A549 (cell line): ENCODE measurements at regions of chr17 and their contacts with region 1.

Region 1: DNA sequence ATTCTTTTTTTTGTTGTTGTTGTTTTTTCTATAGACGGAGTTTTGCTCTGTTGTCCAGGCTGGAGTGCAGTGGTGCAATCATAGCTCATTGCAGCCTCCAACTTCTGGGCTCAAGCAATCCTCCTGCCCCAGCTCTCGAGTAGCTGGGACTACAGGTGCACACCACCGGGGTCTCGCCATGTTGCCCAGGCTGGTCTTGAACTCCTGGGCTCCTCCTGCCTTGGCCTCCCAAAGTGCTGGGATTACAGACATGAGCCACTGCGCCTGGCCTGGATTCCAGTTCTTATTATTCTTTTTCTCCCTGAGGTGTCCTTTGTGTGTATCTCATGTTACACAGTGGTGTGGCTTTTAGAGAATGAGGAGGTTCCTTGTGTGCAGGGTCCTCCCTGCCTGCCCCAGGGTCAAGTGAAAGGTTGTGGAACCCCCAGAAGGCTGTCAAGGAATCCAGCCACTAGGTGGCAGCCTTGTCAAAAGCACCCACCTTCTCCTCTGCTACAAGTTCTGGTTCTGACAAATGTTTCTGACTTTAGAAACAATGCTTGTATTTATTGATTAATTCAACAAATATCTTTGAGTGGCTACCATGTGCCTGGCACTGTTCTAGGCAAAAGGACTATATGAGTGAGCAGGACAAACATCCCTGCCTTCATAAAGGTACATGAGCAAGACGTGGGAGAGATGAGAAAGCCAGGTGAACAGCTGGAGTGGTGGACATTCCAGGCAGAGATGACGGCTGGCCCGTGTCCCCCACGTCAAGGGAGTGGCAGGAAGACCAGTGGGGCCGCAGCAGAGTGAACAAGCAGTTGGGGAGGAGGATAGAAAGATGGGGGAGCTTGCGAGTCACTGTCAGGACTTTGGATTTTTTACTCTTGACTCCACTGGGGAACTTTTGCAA is 112.4 kb downstream of the SPECC1 start:
- DNase-seq: peak; percentile 68 to 82
- ATAC-seq: peak; percentile 89 to 90
- H3K4me3 ChIP-seq: no peak overlapping the region
- H3K27ac ChIP-seq: peak overlapping the region; percentile 34 to 68; a peak in 3 of 6 replicates
- H3K4me1 ChIP-seq: peaks cover 10% of the 10 kb centered on the region
- CTCF ChIP-seq: peak; percentile 99
- EP300 ChIP-seq: no peak
- POLR2A ChIP-seq: no peak
- RAD21 ChIP-seq: peak; percentile 98 to 99

Region 2: DNA sequence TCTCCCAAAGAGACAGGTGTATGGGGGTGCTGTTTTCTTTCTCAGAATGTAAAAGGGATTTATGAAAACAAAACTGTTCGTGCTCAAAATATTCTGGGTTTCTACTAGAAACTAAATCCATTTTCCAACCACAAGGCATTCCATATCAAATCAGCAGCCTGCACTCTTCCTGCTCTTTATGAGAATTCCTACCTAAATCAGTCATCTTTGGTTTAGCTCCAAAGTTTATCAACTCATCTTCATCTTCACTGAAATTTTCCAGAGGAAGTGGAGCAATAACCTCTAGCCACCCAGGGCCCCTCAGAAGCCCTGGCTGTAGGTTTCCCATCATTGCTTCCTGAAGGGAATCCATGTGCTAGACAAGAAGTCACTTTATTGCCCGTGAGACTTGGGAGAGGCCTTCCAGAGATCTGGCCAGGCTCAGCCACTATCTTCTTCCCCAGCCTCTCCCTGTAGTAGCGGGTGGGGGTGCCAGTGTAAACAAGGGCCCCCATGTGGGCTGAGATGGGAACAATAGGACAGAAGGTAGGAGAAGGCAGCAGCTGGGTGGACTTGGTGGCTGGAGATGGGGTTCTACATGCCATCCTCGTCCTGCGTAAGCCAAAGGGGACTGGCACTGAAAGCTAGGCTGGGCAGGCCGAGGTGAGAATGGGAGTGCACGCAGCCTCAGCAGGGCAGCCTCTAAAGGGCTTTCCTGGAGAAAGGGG is 351.5 kb before region 1 on chr17:
- CTCF ChIA-PET with region 1: no interaction called
- POLR2A ChIA-PET with region 1: no interaction called
- DNase-seq: no peak
- ATAC-seq: no peak
- H3K4me3 ChIP-seq: no peak overlapping the region
- H3K27ac ChIP-seq: peak overlapping the region in 1 of 2 experiments; percentile 21; a peak in 1 of 6 replicates
- H3K4me1 ChIP-seq: peaks cover 5% of the 10 kb centered on the region; the same call in 2 of the 3 replicates
- CTCF ChIP-seq: no peak
- EP300 ChIP-seq: no peak
- POLR2A ChIP-seq: no peak
- RAD21 ChIP-seq: no peak

Region 3: GRCh38 chr17:19992803-19993713 is 128.5 kb before region 1 on chr17:
- CTCF ChIA-PET with region 1: interaction called, 111 read pairs
- POLR2A ChIA-PET with region 1: no interaction called
- DNase-seq: peak; percentile 77 to 94
- ATAC-seq: peak; percentile 98 to 100
- H3K4me3 ChIP-seq: peak overlapping the region; percentile 38
- H3K27ac ChIP-seq: peak overlapping the region; percentile 84
- H3K4me1 ChIP-seq: peaks cover 11% of the 10 kb centered on the region
- CTCF ChIP-seq: peak; percentile 97
- EP300 ChIP-seq: no peak
- POLR2A ChIP-seq: no peak
- RAD21 ChIP-seq: peak; percentile 98

Region 4: DNA sequence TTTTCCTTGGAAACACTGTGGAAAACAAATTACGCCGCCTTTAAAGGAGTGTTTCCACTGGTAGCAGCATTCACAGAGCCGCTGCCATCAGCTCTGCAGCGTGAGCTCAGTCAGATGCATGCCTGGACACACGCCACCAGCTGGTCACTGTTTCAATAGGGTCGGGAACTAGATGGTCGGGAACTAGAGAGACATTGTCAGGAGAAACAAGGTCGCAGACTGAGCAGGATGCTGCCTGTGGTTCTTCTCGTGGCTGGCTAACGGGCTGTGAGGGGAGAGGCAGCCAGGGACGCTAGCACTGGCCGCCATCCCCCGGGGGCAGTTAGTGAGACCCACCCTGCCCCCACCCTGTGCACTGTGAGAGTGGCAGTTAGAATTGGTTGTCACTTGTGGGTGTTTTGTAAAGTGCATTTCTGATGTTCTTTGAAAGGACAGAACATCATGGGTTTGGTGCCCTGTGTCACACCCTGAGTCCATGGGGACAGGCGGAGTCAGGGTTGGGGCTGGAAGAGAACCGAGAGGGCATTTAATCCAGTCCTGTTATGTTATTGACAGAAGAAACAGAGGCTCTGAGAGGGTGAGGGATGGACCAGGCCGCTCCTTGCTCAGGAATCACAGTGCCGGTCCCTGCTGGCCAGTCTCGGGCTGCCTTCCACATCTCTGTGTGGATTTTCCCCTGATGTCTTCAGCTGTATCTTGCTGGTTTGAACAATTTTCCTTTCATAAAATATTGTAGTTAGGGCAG is 26.1 kb before region 1 on chr17:
- CTCF ChIA-PET with region 1: interaction called, 12 read pairs
- POLR2A ChIA-PET with region 1: no interaction called
- DNase-seq: peak; percentile 65 to 67
- ATAC-seq: peak; percentile 93 to 95
- H3K4me3 ChIP-seq: no peak overlapping the region
- H3K27ac ChIP-seq: peak overlapping the region; percentile 43 to 77; a peak in 5 of 6 replicates
- H3K4me1 ChIP-seq: peaks cover 22% of the 10 kb centered on the region
- CTCF ChIP-seq: peak; percentile 70
- EP300 ChIP-seq: no peak
- POLR2A ChIP-seq: no peak
- RAD21 ChIP-seq: peak; percentile 69 to 71

Region 5: GRCh38 chr17:20141198-20141972 is 19.8 kb after region 1 on chr17:
- CTCF ChIA-PET with region 1: interaction called, 18 read pairs
- POLR2A ChIA-PET with region 1: no interaction called
- DNase-seq: no peak
- ATAC-seq: no peak
- H3K4me3 ChIP-seq: no peak overlapping the region
- H3K27ac ChIP-seq: no peak overlapping the region
- H3K4me1 ChIP-seq: no peaks in the 10 kb centered on the region
- CTCF ChIP-seq: no peak
- EP300 ChIP-seq: no peak
- POLR2A ChIP-seq: no peak
- RAD21 ChIP-seq: no peak

Region 6: GRCh38 chr17:20184977-20185619 is 63.5 kb after region 1 on chr17:
- CTCF ChIA-PET with region 1: interaction called, 15 read pairs
- POLR2A ChIA-PET with region 1: no interaction called
- DNase-seq: peak in 1 of 2 experiments; percentile 29
- ATAC-seq: peak in 1 of 2 experiments; percentile 36; a peak in 3 of 6 replicates
- H3K4me3 ChIP-seq: no peak overlapping the region
- H3K27ac ChIP-seq: peak overlapping the region in 1 of 2 experiments; percentile 44; a peak in 3 of 6 replicates
- H3K4me1 ChIP-seq: peaks cover 50% of the 10 kb centered on the region
- CTCF ChIP-seq: no peak
- EP300 ChIP-seq: no peak
- POLR2A ChIP-seq: no peak
- RAD21 ChIP-seq: no peak

Region 7: DNA sequence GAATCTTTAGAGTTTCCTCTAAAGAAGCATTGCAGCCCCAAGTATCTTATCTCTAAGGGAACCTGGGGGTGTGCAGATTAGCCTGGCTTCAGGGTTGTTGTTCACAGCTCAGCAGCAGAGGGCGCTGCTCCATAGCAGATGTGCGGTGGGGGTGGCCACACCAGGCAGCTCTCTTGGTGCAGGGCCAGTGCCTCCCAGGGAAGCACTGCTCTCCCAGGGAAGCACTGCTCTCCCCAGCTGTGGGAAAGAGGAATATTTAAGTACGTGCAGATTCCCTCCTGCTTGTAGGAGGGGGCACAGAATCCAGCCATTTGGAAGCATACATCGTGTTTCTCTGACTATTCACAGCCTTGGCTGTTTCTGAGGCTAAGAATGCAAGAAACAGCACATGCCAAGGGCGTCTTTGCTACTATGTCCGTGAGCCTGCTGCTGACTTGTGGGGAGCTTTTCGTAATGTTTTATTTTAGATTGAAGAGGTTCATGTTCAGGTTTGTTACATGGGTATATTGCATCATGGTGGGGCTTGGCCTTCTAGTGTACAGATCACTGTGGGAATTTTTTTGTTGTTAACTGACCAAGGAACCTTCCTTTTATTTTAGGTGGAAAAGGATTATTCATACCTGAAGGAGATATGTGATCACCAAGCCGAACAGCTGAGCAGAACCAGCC is 105.3 kb after region 1 on chr17:
- CTCF ChIA-PET with region 1: interaction called, 49 read pairs
- POLR2A ChIA-PET with region 1: no interaction called
- DNase-seq: peak; percentile 80 to 85
- ATAC-seq: peak; percentile 95 to 97
- H3K4me3 ChIP-seq: no peak overlapping the region
- H3K27ac ChIP-seq: peak overlapping the region; percentile 62 to 83
- H3K4me1 ChIP-seq: peaks cover 64% of the 10 kb centered on the region
- CTCF ChIP-seq: peak; percentile 92
- EP300 ChIP-seq: no peak
- POLR2A ChIP-seq: no peak
- RAD21 ChIP-seq: peak; percentile 89 to 91

Region 8: GRCh38 chr17:20926532-20926931 is 804.9 kb after region 1 on chr17:
- CTCF ChIA-PET with region 1: no interaction called
- POLR2A ChIA-PET with region 1: no interaction called
- DNase-seq: no peak
- ATAC-seq: no peak
- H3K4me3 ChIP-seq: no peak overlapping the region
- H3K27ac ChIP-seq: no peak overlapping the region
- H3K4me1 ChIP-seq: peaks cover 7% of the 10 kb centered on the region; the same call in 2 of the 3 replicates
- CTCF ChIP-seq: no peak
- EP300 ChIP-seq: no peak
- POLR2A ChIP-seq: no peak
- RAD21 ChIP-seq: no peak